ENCODE measurements at regions of chr4 and their contacts with region 1.

Region 1: GRCh38 chr4:140326395-140326993 is 47.0 kb upstream of the SCOC start:
- DNase-seq: peak in 1 of 5 donors; percentile 22
- ATAC-seq: peak in 3 of 4 donors; percentile 63 to 75 (median 71)
- H3K4me3 ChIP-seq: no peak overlapping the region
- H3K27ac ChIP-seq: no peak overlapping the region
- H3K4me1 ChIP-seq: peaks cover 0 to 7% (median 0%) of the 10 kb centered on the region in 12 donors
- H3K27me3 ChIP-seq: no peaks in the 10 kb centered on the region
- CTCF ChIP-seq: peak; percentile 42 to 79 (median 70)
- POLR2A ChIP-seq: no peak

Region 2: DNA sequence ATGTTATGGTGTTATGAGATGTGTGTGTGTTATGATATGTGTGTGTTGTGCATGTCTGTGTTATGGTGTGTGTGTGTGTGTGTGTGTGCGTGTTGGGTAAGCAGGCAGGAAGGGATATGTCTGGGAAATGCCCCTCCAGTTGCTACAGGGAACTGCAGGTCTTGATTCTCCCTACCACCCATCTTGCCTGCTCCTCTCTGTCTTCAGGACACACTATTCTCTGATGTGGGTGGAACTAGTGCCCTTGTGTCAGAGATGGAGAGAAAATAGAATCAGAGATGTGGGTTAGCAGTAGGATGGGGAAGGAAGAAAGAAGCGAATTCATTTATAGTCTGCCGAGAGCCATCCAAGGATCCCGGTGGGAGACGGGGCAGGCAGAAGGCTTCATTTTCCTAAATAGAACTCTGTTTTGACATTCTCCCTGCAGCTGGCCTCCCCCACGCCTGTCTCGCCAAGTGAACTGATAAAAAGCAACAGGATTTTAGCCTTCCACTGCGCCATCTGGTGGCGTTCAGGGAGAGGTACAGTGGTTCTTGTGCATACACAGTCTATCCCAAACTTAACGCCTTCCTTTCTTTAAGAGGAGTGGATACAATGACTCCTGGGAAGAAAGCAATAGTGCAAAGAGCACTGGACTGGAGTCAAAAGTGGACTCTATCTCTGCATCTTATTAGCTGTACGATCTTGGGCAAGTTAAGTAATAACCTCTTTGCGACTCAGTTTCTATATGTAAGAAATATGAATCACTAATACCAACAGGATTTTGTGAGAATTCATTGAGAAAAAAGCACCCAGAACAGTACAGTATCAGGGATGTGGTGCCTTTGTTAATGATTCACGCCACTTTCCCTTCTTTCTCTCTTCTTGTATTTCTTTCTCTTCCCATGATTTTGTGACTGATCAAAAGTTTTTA is 675.0 kb before region 1 on chr4:
- intact Hi-C with region 1: loop called in 2 of 10 experiments (anchors 10 kb)
- DNase-seq: peak; percentile 81 to 92 (median 84)
- ATAC-seq: peak; percentile 75 to 90 (median 86)
- H3K4me3 ChIP-seq: peak overlapping the region in 5 of 12 donors; percentile 6 to 43 (median 26)
- H3K27ac ChIP-seq: no peak overlapping the region
- H3K4me1 ChIP-seq: peaks cover 0 to 10% (median under 1%) of the 10 kb centered on the region in 12 donors
- H3K27me3 ChIP-seq: no peaks in the 10 kb centered on the region
- CTCF ChIP-seq: peak; percentile 85 to 96 (median 92)
- POLR2A ChIP-seq: no peak

Region 3: GRCh38 chr4:140012688-140013486 is 313.6 kb before region 1 on chr4:
- intact Hi-C with region 1: loop called in 9 of 10 experiments (anchors 5 to 10 kb)
- DNase-seq: peak in 4 of 5 donors; percentile 40 to 64 (median 57)
- ATAC-seq: peak; percentile 71 to 90 (median 88)
- H3K4me3 ChIP-seq: peak overlapping the region in 1 of 12 donors; percentile 22
- H3K27ac ChIP-seq: no peak overlapping the region
- H3K4me1 ChIP-seq: peaks cover 0 to 10% (median 0%) of the 10 kb centered on the region in 12 donors
- H3K27me3 ChIP-seq: no peaks in the 10 kb centered on the region
- CTCF ChIP-seq: peak; percentile 27 to 71 (median 54)
- POLR2A ChIP-seq: no peak

Region 4: GRCh38 chr4:140018931-140019618 is 307.4 kb before region 1 on chr4:
- intact Hi-C with region 1: loop called in 9 of 10 experiments (anchors 5 to 10 kb)
- DNase-seq: no peak
- ATAC-seq: no peak
- H3K4me3 ChIP-seq: no peak overlapping the region
- H3K27ac ChIP-seq: peak overlapping the region in 1 of 12 donors; percentile 21
- H3K4me1 ChIP-seq: peaks cover 0 to 30% (median 14%) of the 10 kb centered on the region in 12 donors
- H3K27me3 ChIP-seq: no peaks in the 10 kb centered on the region
- CTCF ChIP-seq: no peak
- POLR2A ChIP-seq: no peak

Region 5: DNA sequence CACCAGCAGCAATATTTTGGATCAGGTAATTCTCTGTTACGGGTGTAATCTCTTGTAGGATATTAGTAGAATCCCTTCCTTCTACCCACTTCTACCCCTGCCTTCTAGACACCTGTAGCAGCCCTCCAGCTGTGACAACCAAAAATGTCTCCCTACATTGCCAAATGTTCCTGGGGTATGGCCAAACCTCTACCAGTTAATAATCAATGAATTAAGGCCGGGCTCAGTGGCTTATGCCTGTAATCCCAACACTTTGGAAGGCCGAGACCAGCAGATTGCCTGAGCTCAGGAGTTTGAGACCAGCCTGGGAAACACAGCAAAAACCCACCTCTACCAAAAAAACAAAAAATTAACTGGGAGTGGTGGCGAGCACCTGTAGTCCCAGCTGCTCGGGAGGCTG is 182.4 kb before region 1 on chr4:
- intact Hi-C with region 1: no loop called
- DNase-seq: no peak
- ATAC-seq: no peak
- H3K4me3 ChIP-seq: no peak overlapping the region
- H3K27ac ChIP-seq: no peak overlapping the region
- H3K4me1 ChIP-seq: peaks cover 0 to 10% (median 0%) of the 10 kb centered on the region in 12 donors
- H3K27me3 ChIP-seq: no peaks in the 10 kb centered on the region
- CTCF ChIP-seq: no peak
- POLR2A ChIP-seq: no peak

Region 6: GRCh38 chr4:140260227-140260626 is 66.3 kb before region 1 on chr4:
- intact Hi-C with region 1: loop called in 5 of 10 experiments (anchors 5 to 10 kb)
- DNase-seq: no peak
- ATAC-seq: no peak
- H3K4me3 ChIP-seq: no peak overlapping the region
- H3K27ac ChIP-seq: no peak overlapping the region
- H3K4me1 ChIP-seq: peaks cover 0 to 5% (median 0%) of the 10 kb centered on the region in 12 donors
- H3K27me3 ChIP-seq: no peaks in the 10 kb centered on the region
- CTCF ChIP-seq: no peak
- POLR2A ChIP-seq: no peak

Region 7: GRCh38 chr4:140286456-140286855 is 40.0 kb before region 1 on chr4:
- intact Hi-C with region 1: no loop called
- DNase-seq: no peak
- ATAC-seq: no peak
- H3K4me3 ChIP-seq: no peak overlapping the region
- H3K27ac ChIP-seq: no peak overlapping the region
- H3K4me1 ChIP-seq: no peaks in the 10 kb centered on the region
- H3K27me3 ChIP-seq: peaks cover 0 to 9% (median 0%) of the 10 kb centered on the region in 9 donors
- CTCF ChIP-seq: no peak
- POLR2A ChIP-seq: no peak